Body of pancreas (tissue), 4 donors: ENCODE measurements at regions of chr12 and their contacts with region 1.

Region 1: GRCh38 chr12:47832263-47832933 is 12.7 kb upstream of the HDAC7 start:
- DNase-seq: no peak
- ATAC-seq: no peak
- H3K4me3 ChIP-seq: no peak overlapping the region
- H3K27ac ChIP-seq: no peak overlapping the region
- H3K4me1 ChIP-seq: peaks cover 12% of the 10 kb centered on the region
- H3K27me3 ChIP-seq: no peaks in the 10 kb centered on the region
- CTCF ChIP-seq: no peak
- POLR2A ChIP-seq: no peak

Region 2: GRCh38 chr12:47715393-47715876 is 117.0 kb before region 1 on chr12:
- intact Hi-C with region 1: loop called (anchors 5 kb)
- DNase-seq: peak; percentile 83 to 88 (median 86)
- ATAC-seq: peak; percentile 76
- H3K4me3 ChIP-seq: no peak overlapping the region
- H3K27ac ChIP-seq: peak overlapping the region in 2 of 4 donors; percentile 22 to 24
- H3K4me1 ChIP-seq: peaks cover 27% of the 10 kb centered on the region
- H3K27me3 ChIP-seq: no peaks in the 10 kb centered on the region
- CTCF ChIP-seq: peak; percentile 63 to 91 (median 81)
- POLR2A ChIP-seq: no peak